IMR-90 (cell line): ENCODE measurements at regions of chr7 and their contacts with region 1.

Region 1: DNA sequence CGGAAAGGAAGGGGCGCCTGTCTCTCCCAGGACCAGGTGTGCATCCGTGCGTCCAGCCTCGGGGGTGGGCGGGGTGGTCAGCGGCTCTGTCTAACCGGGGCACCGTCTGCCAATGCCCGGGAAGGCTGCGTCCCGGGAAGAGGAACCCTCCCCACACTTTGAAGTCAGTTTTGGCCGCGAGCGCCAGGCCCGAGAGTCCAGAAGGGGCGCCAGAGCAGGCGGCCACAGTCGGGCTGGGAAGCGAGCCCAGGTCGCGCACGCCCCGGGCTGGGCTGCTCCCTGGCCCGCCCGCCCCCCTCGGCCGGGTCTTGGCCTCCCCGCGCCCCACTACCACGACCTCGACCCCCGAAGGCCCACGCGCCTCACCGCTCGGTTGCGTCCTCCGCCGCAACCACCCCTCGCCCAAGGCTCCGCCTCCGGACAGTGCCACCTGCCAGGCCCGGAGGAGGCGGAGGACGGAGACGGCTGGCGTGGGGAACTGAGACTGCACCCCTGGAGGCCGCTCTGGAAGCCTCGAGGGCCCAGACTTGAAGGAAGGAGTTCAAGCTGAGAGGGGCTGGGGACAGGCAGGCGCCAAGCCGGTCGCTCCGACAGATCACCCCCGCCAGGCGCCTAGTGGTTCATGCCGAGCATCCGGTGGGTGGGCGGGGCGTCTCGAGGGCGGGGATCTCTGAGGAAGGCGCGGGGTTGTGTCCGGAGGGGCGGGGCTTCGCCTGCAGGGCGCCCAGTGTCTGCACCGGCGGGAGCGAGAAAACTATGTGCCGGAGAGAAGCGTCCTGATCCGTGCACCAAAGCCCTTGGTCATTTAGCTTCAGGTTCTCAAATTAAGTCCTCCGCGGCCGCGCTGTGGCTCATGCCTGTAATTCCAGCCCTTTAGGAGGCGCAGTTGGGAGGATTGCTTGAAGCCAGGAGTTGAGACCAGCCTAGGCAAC is at the start of gene BRAT1:
- DNase-seq: peak; percentile 90
- ATAC-seq: peak; percentile 92
- H3K4me3 ChIP-seq: peak within 1 kb of the TSS; percentile 81
- H3K27ac ChIP-seq: peak within 1 kb of the TSS; percentile 99
- H3K4me1 ChIP-seq: peaks cover 9% of the 10 kb centered on the region
- H3K27me3 ChIP-seq: no peaks in the 10 kb centered on the region
- CTCF ChIP-seq: peak; percentile 47
- POLR2A ChIP-seq: peak; percentile 66; the same call in 1 of the 2 replicates
- RAD21 ChIP-seq: peak; percentile 21; the same call in 1 of the 2 replicates
- total RNA-seq, gene BRAT1: 5.8 and 6.8 TPM in 2 replicates

Region 2: GRCh38 chr7:2477447-2478398 is 77.7 kb before region 1 on chr7:
- CTCF ChIA-PET with region 1: no interaction called
- POLR2A ChIA-PET with region 1: no interaction called
- dilution Hi-C with region 1: no loop called
- in situ Hi-C with region 1: no loop called
- intact Hi-C with region 1: loop called (anchors 2 kb)
- DNase-seq: peak; percentile 49
- ATAC-seq: peak; percentile 99
- H3K4me3 ChIP-seq: no peak overlapping the region
- H3K27ac ChIP-seq: no peak overlapping the region
- H3K4me1 ChIP-seq: no peaks in the 10 kb centered on the region
- H3K27me3 ChIP-seq: peaks cover 13% of the 10 kb centered on the region; the same call in 1 of the 2 replicates
- CTCF ChIP-seq: peak; percentile 85
- POLR2A ChIP-seq: no peak
- RAD21 ChIP-seq: peak; percentile 89

Region 3: DNA sequence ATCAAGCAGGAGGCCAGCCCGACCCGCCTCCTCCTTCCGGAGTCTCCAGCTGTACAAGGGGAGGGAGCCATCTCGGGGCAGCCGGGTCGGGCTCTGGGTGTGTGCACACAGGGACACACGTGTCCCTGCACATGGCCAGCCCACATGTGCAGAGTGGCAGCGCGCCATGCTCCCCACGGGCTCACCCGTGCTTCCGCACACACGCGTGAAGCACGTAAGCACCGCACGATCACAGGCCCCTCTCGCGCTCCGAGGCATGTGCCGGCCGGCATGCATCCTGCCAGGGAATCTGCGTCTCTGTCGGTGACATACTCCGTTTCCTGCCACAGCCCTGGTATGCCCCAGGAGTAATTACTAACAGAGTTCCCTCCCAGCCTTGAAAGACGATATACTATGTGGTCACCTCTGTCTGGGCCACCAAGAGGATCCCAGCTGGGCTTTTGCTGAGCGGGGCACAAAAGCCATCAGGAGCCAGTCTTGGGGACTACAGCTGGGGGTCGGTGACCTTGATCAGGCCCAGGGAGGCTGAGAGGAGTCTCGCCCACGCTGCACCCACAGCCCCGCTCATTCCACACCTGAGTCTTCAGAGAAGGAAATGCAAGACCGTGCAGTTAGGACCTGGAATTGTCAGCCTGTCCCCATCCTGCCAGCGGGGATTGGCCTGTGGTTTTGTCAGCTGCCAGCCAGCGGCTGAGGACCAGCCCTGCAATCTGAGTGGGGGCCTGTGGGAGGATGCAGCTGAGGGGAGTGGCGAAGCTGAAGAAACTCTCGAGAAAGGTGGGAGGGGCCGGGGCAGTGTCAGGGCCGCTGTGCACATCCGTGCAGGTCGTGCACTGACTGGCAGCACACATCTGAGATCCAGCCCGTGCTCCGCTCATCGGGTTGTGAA is 46.8 kb before region 1 on chr7:
- CTCF ChIA-PET with region 1: no interaction called
- POLR2A ChIA-PET with region 1: no interaction called
- dilution Hi-C with region 1: no loop called
- in situ Hi-C with region 1: no loop called
- intact Hi-C with region 1: loop called (anchors 1 kb)
- DNase-seq: peak; percentile 32
- ATAC-seq: no peak
- H3K4me3 ChIP-seq: no peak overlapping the region
- H3K27ac ChIP-seq: no peak overlapping the region
- H3K4me1 ChIP-seq: peaks cover 8% of the 10 kb centered on the region; the same call in 1 of the 2 replicates
- H3K27me3 ChIP-seq: peaks cover 1% of the 10 kb centered on the region; the same call in 1 of the 2 replicates
- CTCF ChIP-seq: no peak
- POLR2A ChIP-seq: no peak
- RAD21 ChIP-seq: no peak

Region 4: GRCh38 chr7:2632733-2633537 is 77.5 kb after region 1 on chr7:
- CTCF ChIA-PET with region 1: no interaction called
- POLR2A ChIA-PET with region 1: no interaction called
- dilution Hi-C with region 1: no loop called
- in situ Hi-C with region 1: no loop called
- intact Hi-C with region 1: loop called (anchors 5 kb)
- DNase-seq: peak; percentile 69
- ATAC-seq: peak; percentile 9
- H3K4me3 ChIP-seq: peak overlapping the region; percentile 73
- H3K27ac ChIP-seq: peak overlapping the region; percentile 81
- H3K4me1 ChIP-seq: peaks cover 31% of the 10 kb centered on the region
- H3K27me3 ChIP-seq: no peaks in the 10 kb centered on the region
- CTCF ChIP-seq: no peak
- POLR2A ChIP-seq: peak; percentile 45
- RAD21 ChIP-seq: no peak; the same call in 1 of the 2 replicates

Region 5: DNA sequence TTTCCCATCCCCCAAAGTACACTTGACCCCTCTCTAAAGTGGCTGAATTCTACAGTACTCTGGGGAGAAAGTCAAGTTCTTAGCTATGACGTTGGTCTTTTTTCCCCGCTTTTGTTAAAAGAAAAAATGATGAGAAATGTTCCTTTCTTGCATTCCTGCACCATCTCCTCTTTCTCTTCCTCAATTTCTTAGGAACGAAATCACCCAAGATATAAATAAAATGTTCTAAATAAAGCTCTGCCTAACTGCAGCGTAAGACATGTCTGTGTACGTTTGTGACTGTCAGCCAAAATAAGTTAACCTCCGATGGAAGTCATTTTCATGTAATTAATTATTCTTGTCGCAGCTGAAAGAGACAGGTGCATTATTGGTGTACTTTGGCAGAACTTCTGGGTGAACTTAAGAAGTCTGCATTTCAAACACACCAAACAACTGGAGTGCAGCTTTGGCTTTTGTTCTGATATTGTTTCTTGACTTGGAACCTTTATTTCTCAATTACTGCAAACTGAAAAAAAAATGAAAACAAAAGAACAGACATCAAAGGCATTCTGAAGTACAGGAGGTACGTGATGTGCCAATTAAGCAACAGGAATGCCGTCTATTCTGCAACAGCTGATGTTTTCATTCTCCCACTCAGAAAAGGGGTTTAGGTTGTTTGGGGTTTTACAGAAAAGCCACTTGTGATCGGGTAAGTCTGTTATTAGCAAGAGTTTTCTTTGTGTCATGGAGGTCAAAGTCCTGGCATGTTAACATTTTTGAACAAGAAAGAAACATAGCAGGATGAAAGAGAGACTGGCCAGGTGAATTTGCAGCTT is 663.2 kb after region 1 on chr7:
- CTCF ChIA-PET with region 1: no interaction called
- POLR2A ChIA-PET with region 1: no interaction called
- dilution Hi-C with region 1: no loop called
- in situ Hi-C with region 1: no loop called
- intact Hi-C with region 1: no loop called
- DNase-seq: no peak
- ATAC-seq: no peak
- H3K4me3 ChIP-seq: no peak overlapping the region
- H3K27ac ChIP-seq: no peak overlapping the region
- H3K4me1 ChIP-seq: no peaks in the 10 kb centered on the region; the same call in 1 of the 2 replicates
- H3K27me3 ChIP-seq: no peaks in the 10 kb centered on the region; the same call in 1 of the 2 replicates
- CTCF ChIP-seq: no peak
- POLR2A ChIP-seq: no peak
- RAD21 ChIP-seq: no peak